PC-9 (cell line): ENCODE measurements at regions of chr20 and their contacts with region 1.

Region 1: DNA sequence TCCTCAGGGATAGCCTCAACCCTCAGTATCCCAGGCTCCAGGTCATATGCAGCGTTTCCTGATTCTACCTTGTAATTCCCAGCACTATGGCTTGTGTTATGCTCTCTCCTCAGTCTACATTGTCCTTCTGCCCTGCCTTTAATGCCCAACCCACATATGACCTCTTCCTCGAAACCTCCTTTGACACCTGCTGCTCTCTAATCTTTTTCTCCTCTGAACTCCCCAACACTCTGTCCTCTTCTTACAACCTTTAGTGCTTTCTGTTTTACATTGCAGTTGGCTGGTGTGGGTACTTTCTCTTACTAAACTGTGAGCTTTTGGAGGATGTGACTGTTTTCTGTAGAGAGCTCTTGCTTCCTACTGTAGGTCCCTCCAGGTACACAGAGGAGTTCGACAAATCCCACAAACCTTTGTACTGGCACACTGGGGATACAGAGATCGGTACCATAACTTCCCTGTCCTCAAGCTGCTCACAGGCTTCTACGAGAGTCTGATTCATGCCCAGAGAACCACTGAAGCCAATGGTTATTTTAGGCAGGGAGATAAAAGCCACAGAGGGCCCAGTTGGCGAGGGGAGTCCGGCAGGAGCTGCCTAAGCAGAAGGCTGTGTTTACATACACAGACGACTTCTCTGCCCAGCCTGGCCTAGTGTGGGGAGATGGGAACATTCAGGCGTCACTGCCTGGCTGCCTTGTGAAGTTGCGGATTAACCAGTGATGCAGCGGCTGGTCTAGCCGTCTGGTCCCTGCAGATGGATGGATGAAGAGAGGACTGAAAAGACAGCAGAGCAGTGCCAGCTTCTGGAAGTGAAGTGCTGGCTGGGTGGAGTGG is 8.4 kb upstream of the EPB41L1 start:
- DNase-seq: no peak
- H3K4me3 ChIP-seq: no peak overlapping the region
- H3K27ac ChIP-seq: no peak overlapping the region
- H3K4me1 ChIP-seq: peaks cover 6% of the 10 kb centered on the region; the same call in 1 of the 2 replicates
- H3K27me3 ChIP-seq: no peaks in the 10 kb centered on the region
- CTCF ChIP-seq: no peak

Region 2: GRCh38 chr20:34437330-34437986 is 1708.6 kb before region 1 on chr20:
- CTCF ChIA-PET with region 1: no interaction called
- POLR2A ChIA-PET with region 1: no interaction called
- intact Hi-C with region 1: no loop called
- DNase-seq: no peak
- H3K4me3 ChIP-seq: no peak overlapping the region
- H3K27ac ChIP-seq: peak overlapping the region; percentile 4
- H3K4me1 ChIP-seq: no peaks in the 10 kb centered on the region
- H3K27me3 ChIP-seq: no peaks in the 10 kb centered on the region
- CTCF ChIP-seq: no peak

Region 3: DNA sequence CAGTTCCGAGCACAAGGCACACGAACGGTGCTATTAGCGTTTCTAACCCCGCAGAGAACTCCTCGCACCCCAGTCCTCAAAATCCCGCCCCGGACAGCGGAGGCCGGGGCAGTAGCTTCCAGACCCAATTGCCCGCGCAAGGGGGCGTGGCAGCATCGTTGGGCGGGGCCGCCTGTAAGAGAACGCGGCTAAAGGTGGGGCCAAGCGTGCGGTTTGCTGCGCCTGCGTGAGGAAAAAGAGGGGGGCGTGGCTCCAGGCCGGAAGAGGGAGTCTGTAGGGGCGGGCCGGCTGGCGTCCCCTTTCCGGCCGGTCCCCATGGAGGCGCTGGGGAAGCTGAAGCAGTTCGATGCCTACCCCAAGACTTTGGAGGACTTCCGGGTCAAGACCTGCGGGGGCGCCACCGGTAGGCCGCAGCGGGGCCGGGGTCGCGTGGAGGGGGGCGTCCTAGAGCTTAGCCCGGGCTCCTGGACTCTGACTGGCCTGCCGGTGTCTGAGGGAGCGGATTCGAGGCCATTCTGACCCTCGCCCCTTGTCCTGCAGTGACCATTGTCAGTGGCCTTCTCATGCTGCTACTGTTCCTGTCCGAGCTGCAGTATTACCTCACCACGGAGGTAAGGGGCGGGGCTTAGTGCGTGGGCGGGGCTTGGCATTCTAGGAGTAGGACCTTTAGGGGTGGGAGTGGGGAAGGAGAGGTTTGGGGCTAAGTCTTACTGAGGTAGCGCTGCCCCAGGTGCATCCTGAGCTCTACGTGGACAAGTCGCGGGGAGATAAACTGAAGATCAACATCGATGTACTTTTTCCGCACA is 604.1 kb before region 1 on chr20 and contains the start of gene ERGIC3:
- CTCF ChIA-PET with region 1: interaction called, 16 read pairs
- POLR2A ChIA-PET with region 1: no interaction called
- intact Hi-C with region 1: no loop called
- DNase-seq: peak; percentile 82 to 99
- H3K4me3 ChIP-seq: peak within 1 kb of the TSS; percentile 88
- H3K27ac ChIP-seq: peak within 1 kb of the TSS; percentile 64
- H3K4me1 ChIP-seq: peaks cover 7% of the 10 kb centered on the region
- H3K27me3 ChIP-seq: no peaks in the 10 kb centered on the region
- CTCF ChIP-seq: no peak; the same call in 1 of the 2 replicates
- total RNA-seq, gene ERGIC3: 341 and 435 TPM in 2 replicates

Region 4: DNA sequence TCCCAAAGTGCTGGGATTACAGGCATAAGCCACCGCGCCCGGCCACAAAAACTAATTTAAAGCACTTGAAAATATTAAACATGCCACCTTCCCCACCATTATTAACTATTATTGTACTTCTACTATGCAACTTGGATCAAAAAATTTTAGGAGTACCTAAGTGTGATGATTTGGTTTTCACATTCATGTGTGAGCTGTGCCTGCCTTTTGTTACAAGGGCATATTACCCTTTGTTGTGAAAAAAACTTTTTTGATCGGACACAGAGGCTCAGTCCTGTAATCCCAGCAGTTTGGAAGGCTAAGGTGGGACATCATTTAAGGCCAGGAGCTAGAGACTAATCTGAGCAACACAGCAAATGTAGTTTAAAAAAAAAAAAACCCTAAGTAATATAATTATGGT is 429.8 kb before region 1 on chr20:
- CTCF ChIA-PET with region 1: no interaction called
- POLR2A ChIA-PET with region 1: interaction called, 17 read pairs
- intact Hi-C with region 1: no loop called
- DNase-seq: no peak
- H3K4me3 ChIP-seq: no peak overlapping the region
- H3K27ac ChIP-seq: no peak overlapping the region
- H3K4me1 ChIP-seq: no peaks in the 10 kb centered on the region
- H3K27me3 ChIP-seq: no peaks in the 10 kb centered on the region
- CTCF ChIP-seq: no peak